ENCODE measurements at regions of chr5 and their contacts with region 1.

Region 1: DNA sequence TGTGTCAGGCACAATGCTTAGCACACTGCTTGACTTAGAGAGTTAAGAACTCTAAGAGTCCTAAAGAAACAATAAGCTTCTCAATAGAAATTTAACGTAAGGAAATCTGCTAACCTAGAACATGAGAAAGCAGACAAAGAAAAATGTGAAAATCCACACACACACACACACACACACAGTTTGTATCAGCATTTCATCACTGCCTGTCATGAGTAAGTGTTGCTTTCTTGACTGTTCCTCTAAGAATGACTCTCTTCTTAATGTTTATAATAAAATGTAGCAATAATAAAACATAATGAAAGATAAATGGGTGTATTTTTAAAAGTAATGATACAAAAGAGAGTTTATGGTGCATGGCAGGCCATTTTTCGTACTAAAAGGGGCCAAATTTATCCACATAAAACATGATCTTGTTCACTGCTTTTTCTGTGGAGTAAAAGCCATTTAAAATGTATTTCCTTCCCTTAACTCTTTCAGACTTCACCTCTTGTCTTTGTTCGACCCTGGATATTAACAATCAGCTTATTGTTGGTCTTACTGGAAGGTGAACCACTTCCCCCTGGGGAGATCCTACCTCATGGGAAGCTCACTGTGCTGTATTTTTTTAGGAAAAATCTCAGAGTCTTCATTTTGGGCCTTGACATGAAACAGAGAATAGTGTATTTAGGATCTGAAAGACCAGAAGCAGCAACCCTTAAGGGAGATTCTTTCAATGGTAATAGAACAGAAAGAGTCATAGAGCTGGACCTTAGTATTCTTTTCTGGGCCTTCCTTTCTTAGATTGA is 107.3 kb upstream of the ANKRD55 start:
- DNase-seq: no peak
- H3K4me3 Mint-ChIP-seq: no peak overlapping the region
- H3K27ac Mint-ChIP-seq: no peak overlapping the region
- H3K4me1 Mint-ChIP-seq: no peaks in the 10 kb centered on the region
- H3K27me3 Mint-ChIP-seq: no peaks in the 10 kb centered on the region
- CTCF ChIP-seq: no peak

Region 2: GRCh38 chr5:55885359-55885758 is 455.0 kb before region 1 on chr5:
- CTCF ChIA-PET with region 1: no interaction called
- POLR2A ChIA-PET with region 1: no interaction called
- intact Hi-C with region 1: no loop called
- DNase-seq: no peak
- H3K4me3 Mint-ChIP-seq: no peak overlapping the region
- H3K27ac Mint-ChIP-seq: no peak overlapping the region
- H3K4me1 Mint-ChIP-seq: peaks cover 5% of the 10 kb centered on the region
- H3K27me3 Mint-ChIP-seq: no peaks in the 10 kb centered on the region
- CTCF ChIP-seq: no peak

Region 3: GRCh38 chr5:56328753-56329560 is 11.4 kb before region 1 on chr5:
- CTCF ChIA-PET with region 1: interaction called, 4 read pairs
- POLR2A ChIA-PET with region 1: interaction called, 21 read pairs
- intact Hi-C with region 1: no loop called
- DNase-seq: peak; percentile 63
- H3K4me3 Mint-ChIP-seq: no peak overlapping the region
- H3K27ac Mint-ChIP-seq: peak overlapping the region; percentile 84
- H3K4me1 Mint-ChIP-seq: peaks cover 24% of the 10 kb centered on the region
- H3K27me3 Mint-ChIP-seq: no peaks in the 10 kb centered on the region
- CTCF ChIP-seq: no peak